Motor neuron (in vitro differentiated cells): ENCODE measurements at regions of chrX and their contacts with region 1.

Region 1: DNA sequence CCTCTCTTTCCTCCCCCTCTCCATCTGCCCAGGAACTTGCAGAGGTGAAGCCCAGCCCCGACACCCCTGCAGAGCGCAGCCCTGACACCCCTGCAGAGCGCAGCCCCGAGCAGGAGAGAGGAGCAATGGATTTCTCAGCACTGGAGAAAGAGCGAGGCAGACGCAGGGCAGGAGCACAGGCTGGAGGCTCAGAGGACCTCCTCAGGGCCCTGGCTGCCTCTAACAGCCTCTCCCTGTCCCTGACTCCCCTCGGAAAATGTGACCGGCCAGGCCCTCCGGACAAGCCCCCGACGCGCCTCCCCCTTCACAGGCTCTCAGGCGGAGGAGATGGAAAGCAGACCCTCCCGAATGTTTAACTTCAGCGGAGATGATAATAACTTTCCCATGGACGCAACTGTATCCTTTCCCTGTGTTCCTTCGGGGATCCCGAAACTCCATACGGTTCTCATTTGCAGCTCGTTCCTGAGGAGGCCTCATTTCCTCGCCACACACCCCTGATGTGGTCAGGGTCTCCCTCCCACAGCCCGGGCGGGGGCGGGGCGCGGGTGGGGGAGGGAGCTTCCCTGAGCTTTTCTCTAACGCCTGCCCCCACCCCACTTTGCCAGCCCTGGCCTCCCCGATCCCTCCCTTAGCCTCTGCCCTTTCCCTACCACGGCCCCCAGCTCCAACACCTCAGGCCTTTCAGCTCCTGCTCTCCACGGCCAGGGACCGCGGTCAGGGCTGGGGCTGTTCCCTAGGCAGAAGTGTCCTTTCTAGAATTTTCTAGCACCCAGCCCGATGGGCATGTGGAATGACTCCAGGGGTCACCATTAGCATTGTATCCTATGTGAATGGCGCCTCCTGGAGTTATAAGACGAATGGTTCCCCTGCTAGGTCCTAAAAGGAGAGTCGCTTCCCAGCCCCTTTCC is 201.1 kb upstream of the BCOR start:
- ATAC-seq: peak in 5 of 8 experiments; percentile 50 to 88 (median 83)
- H3K4me3 ChIP-seq: no peak overlapping the region
- H3K27ac ChIP-seq: peak overlapping the region; percentile 42 to 68
- H3K4me1 ChIP-seq: peaks cover 16 to 25% of the 10 kb centered on the region in 2 donors

Region 2: GRCh38 chrX:39772057-39772832 is 526.6 kb before region 1 on chrX:
- in situ Hi-C with region 1: no loop called
- ATAC-seq: peak; percentile 59 to 76 (median 66)
- H3K4me3 ChIP-seq: no peak overlapping the region
- H3K27ac ChIP-seq: peak overlapping the region; percentile 61
- H3K4me1 ChIP-seq: peaks cover 20 to 24% of the 10 kb centered on the region in 2 donors

Region 3: DNA sequence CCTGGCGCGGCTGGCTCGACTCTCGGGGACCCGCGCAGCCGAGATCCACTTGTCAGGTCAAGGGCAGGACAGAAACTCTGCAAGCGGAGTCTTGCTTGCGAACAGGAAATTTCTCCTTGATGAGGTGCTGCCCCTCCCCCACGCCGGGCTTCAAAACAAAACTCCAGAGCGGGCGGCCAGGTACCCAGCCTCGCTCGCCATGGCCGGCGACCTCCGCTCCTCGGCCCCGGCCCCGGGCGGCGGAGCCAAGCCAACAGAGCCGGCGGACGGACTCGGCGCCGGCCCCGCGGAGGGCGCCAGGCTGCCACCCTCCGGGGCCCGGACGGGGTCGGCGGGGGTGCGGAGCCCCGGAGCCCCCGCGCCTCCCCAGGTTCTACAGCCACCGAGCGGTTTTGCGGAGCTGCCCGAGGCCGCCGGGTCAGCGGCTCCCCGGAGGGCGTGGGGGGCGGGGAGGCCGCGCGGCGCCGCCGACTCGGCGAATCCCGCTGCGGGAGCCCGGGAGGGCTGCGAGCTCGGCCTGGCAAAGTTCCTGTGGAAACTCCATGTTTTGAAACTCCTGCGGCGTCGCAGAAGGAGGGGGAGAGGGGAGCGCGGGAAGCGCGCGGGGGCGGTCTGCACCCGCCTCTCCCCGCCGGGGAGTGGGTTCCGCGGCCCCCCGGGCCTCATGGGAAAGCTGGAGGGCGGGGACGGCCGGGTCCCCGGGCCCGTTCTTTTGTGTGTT is 189.4 kb before region 1 on chrX:
- in situ Hi-C with region 1: no loop called
- ATAC-seq: no peak
- H3K4me3 ChIP-seq: peak overlapping the region; percentile 40 to 48 (median 45)
- H3K27ac ChIP-seq: peak overlapping the region; percentile 93 to 95
- H3K4me1 ChIP-seq: peaks cover 6 to 17% of the 10 kb centered on the region in 2 donors

Region 4: DNA sequence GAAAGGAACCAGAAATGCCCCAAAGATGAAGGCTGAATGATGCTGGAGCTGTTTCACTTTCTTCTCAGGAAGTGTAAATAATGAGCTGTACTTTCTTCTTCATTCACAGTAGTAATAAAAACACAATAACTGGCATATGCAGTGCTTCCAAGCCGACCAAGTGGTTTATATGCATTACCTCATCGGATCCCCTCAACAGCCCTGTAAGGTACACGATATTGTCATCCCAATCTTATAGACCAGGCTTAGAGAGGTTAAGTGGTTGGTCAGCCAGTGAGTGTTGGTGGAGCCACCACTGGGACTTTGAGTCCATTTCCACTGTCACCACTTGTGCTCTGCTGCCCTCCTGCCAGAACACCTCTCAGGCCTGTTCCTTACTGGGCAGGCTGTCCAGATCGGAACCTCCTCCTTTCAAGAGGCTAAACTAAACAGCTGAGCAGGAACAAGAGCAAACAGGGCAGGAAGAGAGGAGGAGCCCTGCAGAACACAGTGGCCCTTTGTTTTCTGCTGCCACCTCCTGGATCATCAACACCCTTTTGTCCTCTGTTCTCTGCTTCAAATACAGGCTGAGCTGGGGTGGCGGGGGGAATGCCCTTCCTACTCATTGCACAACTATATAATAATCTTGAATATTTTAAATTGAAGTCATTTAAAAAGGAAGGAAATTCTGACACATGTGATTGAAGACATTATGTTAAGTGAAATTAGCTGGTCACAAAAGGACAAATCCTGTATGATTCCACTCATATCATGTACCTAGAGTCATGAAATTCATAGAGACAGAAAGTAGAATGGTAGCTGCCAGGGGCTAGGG is 169.4 kb after region 1 on chrX:
- in situ Hi-C with region 1: loop called in 1 of 9 experiments (anchors 25 kb)
- ATAC-seq: peak; percentile 52 to 82 (median 65)
- H3K4me3 ChIP-seq: no peak overlapping the region
- H3K27ac ChIP-seq: no peak overlapping the region
- H3K4me1 ChIP-seq: peaks cover 14 to 25% of the 10 kb centered on the region in 2 donors